Left ventricle myocardium inferior (tissue), 1 donor: ENCODE measurements at regions of chr12 and their contacts with region 1.

Region 1: DNA sequence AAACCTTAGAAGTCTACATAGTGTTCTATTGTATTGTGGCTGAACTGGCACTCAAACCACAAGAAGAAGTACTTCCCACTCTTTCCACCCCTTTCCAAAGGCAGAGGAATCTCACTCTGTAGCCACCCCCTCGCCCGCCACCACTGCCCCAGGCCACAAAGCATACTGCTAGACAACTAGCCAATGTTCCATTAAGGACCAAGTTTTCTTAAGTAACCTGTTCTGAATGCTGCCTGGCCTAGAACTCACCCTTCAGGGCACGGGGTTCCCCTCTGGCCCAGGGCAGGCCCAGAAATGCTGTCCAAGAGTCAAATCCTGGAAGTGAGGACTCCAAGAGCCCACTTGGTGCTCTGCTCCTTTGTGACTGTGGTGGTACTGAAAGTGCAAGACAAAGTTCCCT is 15.7 kb upstream of the PTPRO start:
- DNase-seq: no peak
- H3K4me3 ChIP-seq: no peak overlapping the region
- H3K27ac ChIP-seq: no peak overlapping the region
- H3K4me1 ChIP-seq: no peaks in the 10 kb centered on the region
- H3K27me3 ChIP-seq: no peaks in the 10 kb centered on the region
- CTCF ChIP-seq: no peak

Region 2: DNA sequence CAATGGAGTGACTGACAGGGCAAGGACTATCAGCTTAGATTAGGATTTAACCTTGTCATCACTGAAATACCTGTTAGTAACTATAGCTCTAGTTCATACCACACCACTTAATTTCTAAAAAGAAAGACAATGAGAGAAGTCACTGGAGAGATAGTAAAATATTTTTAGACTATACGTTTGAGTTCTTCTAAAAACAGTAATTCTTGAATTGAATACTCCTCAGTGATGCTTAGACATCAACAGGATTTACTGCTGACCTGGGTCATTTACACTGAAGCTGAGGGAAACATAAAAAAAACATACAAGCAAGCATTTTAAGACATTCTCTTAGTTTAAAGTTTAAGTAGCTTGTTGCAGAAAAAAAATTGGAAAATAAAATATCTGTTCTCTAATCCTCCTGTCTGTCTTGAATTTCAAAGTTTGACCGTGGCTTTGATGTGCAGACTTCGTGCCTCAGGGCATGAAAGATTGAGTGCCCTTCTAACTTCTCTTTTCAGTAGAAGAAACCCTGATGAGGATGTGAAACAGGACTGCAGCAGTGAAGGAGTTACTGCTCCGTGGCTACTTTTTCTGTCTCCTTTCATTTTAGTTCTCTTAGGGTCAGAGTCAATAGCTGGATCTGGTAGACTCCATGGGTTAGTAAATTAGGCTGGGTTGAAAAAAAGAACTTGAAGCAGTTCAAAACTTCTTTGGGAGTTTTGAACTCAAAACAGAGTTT is 187.9 kb after region 1 on chr12:
- intact Hi-C with region 1: loop called (anchors 10 kb)
- DNase-seq: no peak
- H3K4me3 ChIP-seq: no peak overlapping the region
- H3K27ac ChIP-seq: no peak overlapping the region
- H3K4me1 ChIP-seq: no peaks in the 10 kb centered on the region
- H3K27me3 ChIP-seq: no peaks in the 10 kb centered on the region
- CTCF ChIP-seq: no peak